WTC11 (cell line): ENCODE measurements at regions of chr13 and their contacts with region 1.

Region 1: DNA sequence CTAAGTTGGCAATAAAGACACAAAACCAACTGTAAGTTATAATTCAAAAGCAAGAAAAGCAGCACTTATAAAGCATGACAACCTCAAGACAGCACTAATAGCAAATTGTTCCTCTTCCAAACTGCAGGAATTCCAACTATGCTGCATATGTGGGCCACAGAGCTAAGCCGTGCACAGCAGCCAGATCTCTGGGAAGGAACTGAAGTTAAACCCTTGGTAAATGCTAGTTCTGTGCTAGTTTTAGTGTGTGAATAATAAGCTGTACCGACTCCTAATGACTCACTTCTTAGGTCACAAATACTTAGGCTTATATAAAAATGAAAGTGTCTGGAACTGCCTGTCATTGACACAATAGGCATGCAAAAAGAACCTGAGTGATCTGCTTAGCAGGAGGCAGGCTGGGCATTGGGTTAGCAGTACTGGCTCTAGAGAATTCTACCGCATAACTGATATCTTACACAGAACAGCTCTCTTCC is 21.2 kb upstream of the GTF3A start:
- DNase-seq: no peak
- ATAC-seq: peak; percentile 79
- H3K4me3 Mint-ChIP-seq: no peak overlapping the region
- H3K27ac Mint-ChIP-seq: peak overlapping the region; percentile 46
- H3K4me1 Mint-ChIP-seq: peaks cover 18% of the 10 kb centered on the region
- H3K27me3 Mint-ChIP-seq: no peaks in the 10 kb centered on the region
- CTCF ChIP-seq: no peak

Region 2: DNA sequence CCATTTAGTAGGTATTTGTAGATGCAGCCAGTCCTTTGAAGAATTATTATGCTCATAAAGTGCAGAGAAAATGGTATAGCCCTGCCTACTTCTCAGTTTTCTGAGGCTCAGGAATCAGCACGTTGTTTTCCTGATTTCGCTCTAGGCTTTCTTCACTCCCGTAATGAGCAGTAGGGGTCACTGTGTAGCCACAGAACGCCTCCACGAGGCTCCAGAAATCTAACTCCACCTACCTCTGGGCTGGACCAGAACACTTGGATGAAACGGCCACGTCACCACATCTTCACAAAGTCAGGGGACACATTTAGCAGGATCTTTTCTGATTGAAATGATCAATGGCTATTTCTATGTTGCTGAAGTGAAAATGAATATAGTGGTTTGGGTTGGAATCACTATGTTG is 28.6 kb before region 1 on chr13:
- CTCF ChIA-PET with region 1: interaction called, 10 read pairs
- POLR2A ChIA-PET with region 1: no interaction called
- DNase-seq: peak; percentile 66
- ATAC-seq: peak; percentile 88
- H3K4me3 Mint-ChIP-seq: no peak overlapping the region
- H3K27ac Mint-ChIP-seq: no peak overlapping the region
- H3K4me1 Mint-ChIP-seq: peaks cover 22% of the 10 kb centered on the region
- H3K27me3 Mint-ChIP-seq: peaks cover 15% of the 10 kb centered on the region
- CTCF ChIP-seq: peak; percentile 24; the same call in 1 of the 2 replicates